AG04449 (cell line): ENCODE measurements at regions of chr16 and their contacts with region 1.

Region 1: DNA sequence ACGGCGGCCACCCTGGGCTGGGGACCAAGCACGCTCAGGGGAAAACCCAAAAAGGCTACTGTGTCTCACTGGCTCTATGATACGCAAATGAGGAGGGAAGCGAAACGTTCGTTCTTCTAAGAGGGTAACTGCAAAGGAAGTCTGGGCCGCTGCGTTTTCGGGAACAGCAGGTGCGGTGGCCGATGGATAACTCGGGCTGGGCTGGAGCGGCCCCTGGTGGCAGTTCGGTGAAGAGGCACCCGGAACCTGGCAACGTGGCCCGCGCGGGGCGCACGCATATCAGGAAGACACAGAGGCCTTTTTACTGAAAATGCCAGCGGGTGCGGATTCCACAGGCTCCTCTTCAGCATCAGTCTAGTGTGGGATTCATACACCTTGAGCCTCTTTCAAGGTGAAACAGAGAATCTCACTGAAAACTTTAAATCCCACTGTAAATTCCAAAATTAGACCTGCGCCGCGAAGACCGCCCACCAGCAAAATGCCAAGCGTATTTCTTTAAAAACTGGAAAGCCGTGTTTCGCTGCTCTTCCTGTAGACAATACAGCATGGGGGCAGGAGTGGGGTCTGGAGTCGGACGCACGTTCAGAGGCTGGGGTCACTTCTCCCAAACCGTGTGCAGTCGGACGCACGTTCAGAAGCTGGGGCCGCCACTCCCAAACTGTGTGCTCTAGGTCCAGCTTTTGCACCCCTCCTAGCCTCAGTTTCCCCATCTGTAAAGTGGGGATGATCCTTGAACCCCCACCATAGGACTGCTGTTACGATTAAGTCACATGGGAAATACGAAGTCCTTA is 44.4 kb upstream of the METTL9 start:
- DNase-seq: no peak
- H3K4me3 ChIP-seq: peak overlapping the region; percentile 20
- CTCF ChIP-seq: peak; percentile 99

Region 2: GRCh38 chr16:21568502-21569189 is 13.7 kb after region 1 on chr16:
- CTCF ChIA-PET with region 1: interaction called, 10 read pairs
- POLR2A ChIA-PET with region 1: no interaction called
- DNase-seq: no peak
- H3K4me3 ChIP-seq: no peak overlapping the region
- CTCF ChIP-seq: no peak